H1 (cell line): ENCODE measurements at regions of chr9 and their contacts with region 1.

Region 1: GRCh38 chr9:98192503-98193335 is at the start of gene CORO2A:
- DNase-seq: peak; percentile 57 to 88
- H3K4me3 ChIP-seq: peak within 1 kb of the TSS; percentile 63 to 76 (median 74)
- H3K27ac ChIP-seq: no peak within 1 kb of the TSS
- H3K4me1 ChIP-seq: peaks cover 0 to 16% (median 8%) of the 10 kb centered on the region in 4 experiments; a peak in 6 of 7 replicates
- H3K27me3 ChIP-seq: peaks cover 0 to 7% (median 3%) of the 10 kb centered on the region in 4 experiments; a peak in 2 of 7 replicates
- CTCF ChIP-seq: peak; percentile 64 to 76 (median 68)
- EP300 ChIP-seq: no peak
- POLR2A ChIP-seq: no peak
- RAD21 ChIP-seq: peak; percentile 57 to 69
- total RNA-seq, gene CORO2A: 26.2 and 27.9 TPM in 2 replicates

Region 2: GRCh38 chr9:98172561-98173003 is 20.1 kb before region 1 on chr9:
- CTCF ChIA-PET with region 1: interaction called, 12 read pairs
- POLR2A ChIA-PET with region 1: no interaction called
- DNase-seq: no peak
- H3K4me3 ChIP-seq: no peak overlapping the region
- H3K27ac ChIP-seq: no peak overlapping the region
- H3K4me1 ChIP-seq: peaks cover 10 to 29% (median 22%) of the 10 kb centered on the region in 4 experiments
- H3K27me3 ChIP-seq: no peaks in the 10 kb centered on the region
- CTCF ChIP-seq: no peak
- EP300 ChIP-seq: no peak
- POLR2A ChIP-seq: no peak
- RAD21 ChIP-seq: no peak

Region 3: DNA sequence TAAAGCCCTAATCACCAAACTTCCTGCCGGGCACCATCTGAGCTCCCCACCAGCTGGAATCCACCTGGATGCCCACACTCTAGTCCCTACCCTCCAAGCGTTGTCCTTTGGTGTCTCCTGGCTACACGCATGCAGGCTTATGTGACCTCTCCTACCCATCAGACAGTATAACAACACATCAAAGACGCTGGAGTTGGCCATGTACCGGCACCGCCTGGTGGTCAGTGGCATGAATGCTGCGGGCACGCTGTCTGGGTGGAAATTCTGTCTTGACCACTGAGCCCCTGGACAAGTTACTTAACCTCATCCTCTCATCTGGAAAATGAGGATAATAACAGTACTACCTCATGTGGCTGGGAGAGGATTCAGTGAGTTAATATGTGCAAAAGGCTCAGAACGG is 23.1 kb after region 1 on chr9:
- CTCF ChIA-PET with region 1: interaction called, 10 read pairs
- POLR2A ChIA-PET with region 1: interaction called, 4 read pairs
- DNase-seq: peak in 1 of 2 experiments; percentile 74
- H3K4me3 ChIP-seq: no peak overlapping the region
- H3K27ac ChIP-seq: no peak overlapping the region
- H3K4me1 ChIP-seq: peaks cover 7 to 25% (median 15%) of the 10 kb centered on the region in 4 experiments
- H3K27me3 ChIP-seq: no peaks in the 10 kb centered on the region
- CTCF ChIP-seq: peak; percentile 75 to 94 (median 87)
- EP300 ChIP-seq: no peak
- POLR2A ChIP-seq: no peak
- RAD21 ChIP-seq: peak; percentile 66 to 73

Region 4: DNA sequence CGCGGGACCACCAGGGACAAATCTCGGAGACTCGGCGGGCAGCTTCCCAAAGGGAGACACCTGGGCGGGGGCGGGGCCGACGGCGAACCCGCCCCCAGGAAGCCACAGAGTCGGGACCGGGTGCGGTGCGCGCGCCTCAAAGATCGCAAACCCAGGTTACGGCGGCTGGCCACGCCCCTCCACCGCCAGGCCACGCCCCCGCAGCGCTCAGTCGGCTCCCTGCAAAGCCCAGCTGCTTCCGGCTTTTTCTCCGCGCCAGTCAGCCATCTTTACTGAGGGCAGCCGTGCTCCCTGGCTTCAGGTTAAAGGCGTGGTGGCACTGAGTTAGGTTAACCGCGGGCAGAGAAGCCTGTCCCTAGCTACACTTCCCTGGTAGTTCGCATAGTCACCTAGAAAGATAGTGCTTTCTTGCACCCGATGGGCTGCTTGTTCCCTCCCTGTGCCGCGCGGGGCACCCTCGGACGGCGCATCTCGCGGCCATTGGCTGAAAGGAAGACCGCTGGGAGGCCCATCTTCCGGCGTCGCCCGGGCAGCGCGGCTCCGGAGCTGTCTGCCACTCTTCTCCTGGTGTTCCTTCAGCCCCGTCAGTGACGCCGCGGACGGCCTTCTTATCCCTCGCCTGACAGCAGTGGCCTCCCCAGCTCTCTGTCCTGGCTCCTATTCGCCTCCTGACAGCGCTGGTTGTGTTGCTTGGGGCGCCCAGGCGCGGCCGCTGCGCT is 63.0 kb after region 1 on chr9 and contains the start of gene TBC1D2:
- CTCF ChIA-PET with region 1: interaction called, 14 read pairs
- POLR2A ChIA-PET with region 1: interaction called, 5 read pairs
- DNase-seq: peak; percentile 82 to 99
- H3K4me3 ChIP-seq: peak within 1 kb of the TSS; percentile 80 to 93 (median 88)
- H3K27ac ChIP-seq: peak within 1 kb of the TSS; percentile 94
- H3K4me1 ChIP-seq: peaks cover 0 to 4% (median 1%) of the 10 kb centered on the region in 4 experiments; a peak in 5 of 7 replicates
- H3K27me3 ChIP-seq: no peaks in the 10 kb centered on the region
- CTCF ChIP-seq: no peak
- EP300 ChIP-seq: no peak
- POLR2A ChIP-seq: no peak; a peak in 1 of 3 replicates
- RAD21 ChIP-seq: no peak
- total RNA-seq, gene TBC1D2: 7.4 and 8.0 TPM in 2 replicates

Region 5: DNA sequence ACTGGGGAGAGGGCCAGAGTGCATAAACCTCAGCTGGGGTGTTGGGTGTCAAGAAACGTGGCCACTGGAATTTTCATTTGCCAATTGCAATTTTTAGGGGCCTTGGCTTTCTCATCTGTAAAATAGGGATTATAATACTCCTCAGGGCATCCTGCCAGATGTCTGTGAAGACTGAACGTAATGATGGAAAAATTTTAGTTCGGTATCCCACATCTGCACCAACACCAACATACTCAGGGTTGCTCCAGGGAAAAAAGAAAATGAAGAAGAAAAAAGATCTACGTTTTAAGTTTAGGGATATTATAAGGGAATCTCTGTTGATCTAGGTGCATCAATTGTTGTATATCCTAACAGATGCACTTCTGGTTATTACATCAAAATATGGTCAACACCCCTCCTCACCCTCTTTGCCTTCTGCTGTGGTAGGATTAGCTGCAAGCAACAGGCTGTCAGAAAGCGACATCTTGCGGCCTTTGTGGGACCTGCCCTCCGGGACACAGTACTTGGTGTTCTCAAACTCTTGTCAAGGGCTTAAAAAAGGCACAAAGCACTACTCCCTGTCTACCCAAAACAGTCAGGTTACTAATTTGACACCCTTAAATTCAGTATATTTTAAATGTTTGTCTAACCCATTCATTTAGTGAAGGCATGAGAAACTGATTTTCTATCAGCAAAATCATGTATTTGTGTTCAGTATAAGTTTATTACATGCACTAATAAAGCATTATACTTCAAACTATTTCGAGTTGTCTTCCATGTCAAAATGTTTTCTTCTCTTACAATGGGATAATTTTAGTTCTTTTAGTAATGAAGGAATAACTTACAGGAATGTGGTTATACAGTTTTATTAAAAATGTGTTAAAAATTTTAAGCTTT is 71.0 kb after region 1 on chr9:
- CTCF ChIA-PET with region 1: interaction called, 20 read pairs
- POLR2A ChIA-PET with region 1: interaction called, 5 read pairs
- DNase-seq: peak in 1 of 2 experiments; percentile 75
- H3K4me3 ChIP-seq: no peak overlapping the region
- H3K27ac ChIP-seq: no peak overlapping the region
- H3K4me1 ChIP-seq: peaks cover 0 to 3% (median 0%) of the 10 kb centered on the region in 4 experiments; a peak in 1 of 7 replicates
- H3K27me3 ChIP-seq: no peaks in the 10 kb centered on the region
- CTCF ChIP-seq: peak; percentile 88 to 98 (median 93)
- EP300 ChIP-seq: no peak
- POLR2A ChIP-seq: no peak
- RAD21 ChIP-seq: peak; percentile 98 to 99